HCT116 (cell line): ENCODE measurements at regions of chr2 and their contacts with region 1.

Region 1: DNA sequence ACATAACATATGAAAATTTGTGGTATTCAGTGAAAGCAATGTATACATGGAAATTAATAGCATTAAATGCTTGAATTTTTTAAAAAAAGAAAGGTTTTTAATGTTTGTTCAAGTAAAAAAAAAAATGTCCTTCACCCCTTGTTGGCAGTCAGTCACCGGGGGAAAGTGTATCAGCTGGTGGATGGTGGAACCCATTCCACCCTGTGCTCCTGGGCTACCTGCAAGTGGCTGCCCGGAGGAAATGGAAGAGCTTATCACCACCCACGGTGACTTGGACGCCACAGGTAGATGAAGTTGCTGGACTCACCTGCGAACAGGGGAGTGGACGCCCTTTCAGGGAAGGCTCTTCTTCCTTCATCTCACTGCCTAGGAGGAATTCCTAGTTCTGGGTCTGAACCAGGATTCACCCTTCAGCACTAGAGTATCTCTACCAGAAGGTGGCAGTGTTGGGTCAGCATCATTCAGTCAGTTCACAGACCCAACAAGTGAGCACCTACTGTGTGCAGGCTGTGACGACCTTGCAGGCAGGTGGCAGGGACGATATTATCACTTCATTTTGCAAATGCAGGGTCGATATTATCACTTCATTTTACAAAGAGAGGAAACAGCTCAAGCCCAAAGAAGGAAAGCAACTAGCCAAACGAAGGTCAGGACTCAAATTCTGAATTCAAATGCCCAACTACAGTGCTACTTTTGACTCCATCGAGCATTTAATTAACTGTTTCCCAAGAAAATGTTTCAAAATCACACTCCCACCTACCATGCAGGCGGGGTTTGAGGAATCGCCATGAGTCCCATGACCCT is 35.8 kb downstream of the CIB4 start:
- DNase-seq: peak; percentile 61
- ATAC-seq: peak; percentile 88
- H3K4me3 ChIP-seq: no peak overlapping the region
- H3K27ac ChIP-seq: no peak overlapping the region
- H3K4me1 ChIP-seq: peaks cover 14 to 26% of the 10 kb centered on the region in 2 experiments; a peak in 3 of 4 replicates
- H3K27me3 ChIP-seq: no peaks in the 10 kb centered on the region
- CTCF ChIP-seq: peak; percentile 84 to 90 (median 86)
- POLR2A ChIP-seq: no peak
- RAD21 ChIP-seq: peak; percentile 98

Region 2: GRCh38 chr2:26483957-26484565 is 121.3 kb before region 1 on chr2:
- CTCF ChIA-PET with region 1: no interaction called
- POLR2A ChIA-PET with region 1: no interaction called
- RAD21 ChIA-PET with region 1: no interaction called
- intact Hi-C with region 1: no loop called
- DNase-seq: no peak
- ATAC-seq: no peak
- H3K4me3 ChIP-seq: no peak overlapping the region
- H3K27ac ChIP-seq: no peak overlapping the region
- H3K4me1 ChIP-seq: no peaks in the 10 kb centered on the region
- H3K27me3 ChIP-seq: 0 out of 2 replicates have a peak, but pooled peaks cover 4% of the 10 kb centered on the region
- CTCF ChIP-seq: no peak
- POLR2A ChIP-seq: no peak
- RAD21 ChIP-seq: no peak

Region 3: DNA sequence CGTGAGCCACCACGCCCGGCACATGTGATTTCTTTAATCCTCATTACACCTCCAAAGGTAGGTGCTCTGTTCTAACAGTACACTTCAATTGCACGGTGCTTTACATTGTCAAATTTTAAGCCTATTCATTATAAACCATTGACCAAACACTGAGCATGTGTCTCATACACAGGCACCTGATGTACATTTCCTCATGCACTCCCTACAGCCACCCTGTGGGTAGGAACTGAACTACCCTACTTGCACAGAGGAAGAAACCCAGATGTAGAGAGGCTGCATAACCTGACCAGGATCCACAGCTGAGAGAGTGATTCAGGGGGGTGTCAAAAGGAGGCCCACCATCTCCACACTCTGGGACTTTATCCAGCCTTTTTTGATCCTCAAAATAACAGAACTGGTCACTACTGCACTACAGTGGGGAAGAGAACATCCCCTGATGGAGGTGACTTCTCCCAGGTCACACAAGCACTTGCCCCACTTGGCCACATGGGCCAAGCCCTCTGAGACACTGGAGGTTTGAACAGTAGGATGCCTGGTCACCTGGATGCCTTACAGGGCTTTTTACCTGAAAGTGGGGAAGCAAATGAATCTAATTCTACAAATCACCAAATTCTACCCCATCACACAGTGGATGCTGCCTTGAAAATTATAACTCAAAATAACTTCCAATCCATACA is 235.7 kb after region 1 on chr2:
- CTCF ChIA-PET with region 1: no interaction called
- POLR2A ChIA-PET with region 1: no interaction called
- RAD21 ChIA-PET with region 1: no interaction called
- intact Hi-C with region 1: loop called (anchors 5 kb)
- DNase-seq: peak; percentile 15
- ATAC-seq: peak; percentile 93
- H3K4me3 ChIP-seq: no peak overlapping the region
- H3K27ac ChIP-seq: no peak overlapping the region
- H3K4me1 ChIP-seq: peaks cover 0 to 2% of the 10 kb centered on the region in 2 experiments; a peak in 2 of 4 replicates
- H3K27me3 ChIP-seq: peaks cover 26% of the 10 kb centered on the region
- CTCF ChIP-seq: peak in 2 of 3 experiments; percentile 29 to 42; a peak in 3 of 6 replicates
- POLR2A ChIP-seq: no peak
- RAD21 ChIP-seq: peak; percentile 51